ENCODE measurements at regions of chr13 and their contacts with region 1.

Region 1: GRCh38 chr13:102854675-102855074 is 8.8 kb downstream of the ERCC5 start:
- DNase-seq: no peak
- ATAC-seq: no peak
- H3K4me3 ChIP-seq: no peak overlapping the region
- H3K27ac ChIP-seq: no peak overlapping the region
- H3K4me1 ChIP-seq: no peaks in the 10 kb centered on the region
- H3K27me3 ChIP-seq: no peaks in the 10 kb centered on the region
- CTCF ChIP-seq: no peak
- POLR2A ChIP-seq: no peak

Region 2: DNA sequence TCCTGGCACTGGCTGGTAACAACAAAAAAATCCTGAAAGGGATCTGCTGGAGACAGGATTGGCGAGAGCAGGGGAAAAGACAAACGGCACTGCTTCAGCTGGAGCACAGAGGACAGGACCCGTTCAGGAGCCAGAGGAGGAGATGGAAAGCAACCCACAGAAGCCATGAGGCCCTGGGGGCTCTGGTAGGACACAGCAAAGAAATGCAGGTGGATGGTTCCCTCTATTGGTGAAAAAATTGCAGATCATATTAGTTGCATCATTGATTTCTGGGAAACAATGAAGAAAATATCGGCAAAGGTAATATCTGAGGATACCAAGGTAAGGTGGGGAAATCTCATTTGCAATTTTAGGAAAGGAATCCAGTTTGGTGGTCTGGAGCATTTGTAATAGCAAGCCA is 283.6 kb before region 1 on chr13:
- in situ Hi-C with region 1: loop called in 1 of 4 experiments (anchors 10 kb)
- intact Hi-C with region 1: no loop called
- DNase-seq: no peak
- ATAC-seq: no peak
- H3K4me3 ChIP-seq: no peak overlapping the region
- H3K27ac ChIP-seq: no peak overlapping the region
- H3K4me1 ChIP-seq: no peaks in the 10 kb centered on the region
- H3K27me3 ChIP-seq: no peaks in the 10 kb centered on the region
- CTCF ChIP-seq: no peak
- POLR2A ChIP-seq: no peak

Region 3: DNA sequence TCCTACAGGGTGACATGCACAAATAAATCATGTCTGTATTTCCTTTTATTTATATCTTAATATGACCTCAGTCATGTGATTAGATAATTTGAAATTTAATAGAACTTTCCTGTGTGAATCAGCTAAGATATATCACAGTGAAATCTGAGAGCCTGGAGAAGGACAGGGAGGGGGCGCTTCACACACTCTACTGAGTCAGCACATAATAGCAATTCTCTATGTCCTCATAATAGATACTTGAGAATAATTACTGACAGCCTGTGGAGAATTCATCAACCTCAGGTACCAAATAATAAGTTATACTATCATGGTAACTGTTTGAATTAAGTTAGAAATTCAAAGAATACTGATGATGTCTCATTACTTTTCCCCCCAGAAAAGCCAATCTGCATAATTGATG is 309.6 kb after region 1 on chr13:
- in situ Hi-C with region 1: no loop called
- intact Hi-C with region 1: no loop called
- DNase-seq: no peak
- ATAC-seq: no peak
- H3K4me3 ChIP-seq: no peak overlapping the region
- H3K27ac ChIP-seq: no peak overlapping the region
- H3K4me1 ChIP-seq: no peaks in the 10 kb centered on the region
- H3K27me3 ChIP-seq: no peaks in the 10 kb centered on the region
- CTCF ChIP-seq: no peak
- POLR2A ChIP-seq: no peak

Measured in gastrocnemius medialis (tissue), 4 donors.